AG04449 (cell line): ENCODE measurements at regions of chr1 and their contacts with region 1.

Region 1: DNA sequence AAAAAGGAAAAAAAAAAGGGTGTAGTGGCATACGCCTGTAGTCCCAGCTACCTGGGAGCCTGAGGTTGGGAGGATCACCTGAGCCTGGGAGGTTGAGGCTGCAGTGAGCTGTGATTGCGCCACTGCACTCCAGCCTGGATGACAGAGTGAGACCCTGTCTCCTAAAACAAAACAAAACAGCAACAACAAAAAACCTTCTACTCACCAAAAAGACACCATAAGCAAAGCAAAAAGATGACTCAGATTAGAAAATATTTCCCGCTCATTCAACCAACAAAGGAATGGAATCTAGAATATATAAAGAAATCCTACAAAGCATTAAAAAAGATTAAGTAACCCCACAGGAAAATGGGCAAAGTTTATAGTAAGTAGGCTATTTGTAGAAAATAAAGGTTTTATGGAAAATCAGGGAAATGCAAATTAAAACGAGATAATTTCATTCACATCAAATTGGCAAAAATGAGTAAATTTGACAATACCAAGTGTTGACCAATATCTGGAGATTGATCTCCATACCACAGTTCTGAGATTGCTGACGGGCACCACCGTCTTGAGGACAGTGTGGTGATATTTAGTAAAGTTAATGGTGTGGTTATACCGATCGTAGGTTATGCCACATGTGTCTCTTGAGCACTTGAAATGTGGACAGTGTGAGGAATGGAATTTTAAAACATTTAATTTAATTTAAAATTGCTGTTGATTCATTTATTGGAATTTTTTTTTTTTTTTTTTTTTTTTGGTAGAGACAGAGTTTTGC is 54.0 kb downstream of the PIK3CD start:
- DNase-seq: no peak
- H3K4me3 ChIP-seq: no peak overlapping the region
- CTCF ChIP-seq: no peak

Region 2: GRCh38 chr1:9455487-9456234 is 249.9 kb before region 1 on chr1:
- CTCF ChIA-PET with region 1: no interaction called
- POLR2A ChIA-PET with region 1: no interaction called
- DNase-seq: no peak
- H3K4me3 ChIP-seq: no peak overlapping the region
- CTCF ChIP-seq: peak; percentile 87

Region 3: GRCh38 chr1:9689011-9689706 is 16.4 kb before region 1 on chr1:
- CTCF ChIA-PET with region 1: interaction called, 28 read pairs
- POLR2A ChIA-PET with region 1: interaction called, 8 read pairs
- DNase-seq: no peak
- H3K4me3 ChIP-seq: peak overlapping the region; percentile 71
- CTCF ChIP-seq: no peak

Region 4: DNA sequence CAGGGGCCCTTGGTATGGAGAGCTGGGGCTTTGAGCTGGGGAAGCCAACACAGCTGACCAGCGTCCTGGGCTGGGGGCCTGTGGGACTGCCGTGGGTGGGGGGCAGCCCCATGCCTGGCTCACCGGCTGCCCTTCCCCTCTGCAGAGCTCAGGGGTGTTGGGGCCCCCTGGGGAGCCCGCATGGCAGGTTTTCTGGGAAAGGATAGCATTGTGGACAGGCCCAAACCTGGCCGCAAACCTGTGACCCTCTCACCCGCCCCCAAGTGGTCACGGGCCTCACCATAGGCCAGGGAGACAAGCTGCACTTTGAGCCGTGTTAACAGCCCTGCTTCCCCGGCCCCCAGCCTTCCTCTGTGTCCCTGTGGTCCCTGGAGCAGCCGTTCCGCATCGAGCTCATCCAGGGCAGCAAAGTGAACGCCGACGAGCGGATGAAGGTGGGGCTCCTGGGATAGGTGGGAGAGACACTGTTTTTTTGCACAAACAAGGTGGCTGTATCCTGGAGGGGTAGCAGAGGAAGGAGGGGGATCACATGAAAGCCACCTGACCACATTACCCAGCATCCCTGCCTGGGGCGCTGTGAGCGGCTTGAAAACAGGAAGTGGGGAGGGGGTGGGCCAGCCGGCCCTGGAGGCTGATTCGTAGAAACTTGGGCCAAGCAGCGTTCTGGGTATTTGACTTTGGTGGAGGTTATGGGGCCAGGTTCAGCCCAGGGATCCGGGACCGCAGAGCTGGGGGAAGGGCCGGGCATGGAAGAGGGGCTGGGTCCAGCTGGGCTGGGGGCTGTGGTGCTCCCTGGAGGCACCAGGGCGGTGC is 11.9 kb after region 1 on chr1:
- CTCF ChIA-PET with region 1: interaction called, 21 read pairs
- POLR2A ChIA-PET with region 1: no interaction called
- DNase-seq: no peak
- H3K4me3 ChIP-seq: no peak overlapping the region
- CTCF ChIP-seq: no peak